Left ventricle myocardium superior (tissue), 1 donor: ENCODE measurements at regions of chr9 and their contacts with region 1.

Region 1: GRCh38 chr9:109903515-109904138 is 123.6 kb downstream of the PALM2AKAP2 start:
- DNase-seq: no peak
- ATAC-seq: peak; percentile 54

Region 2: GRCh38 chr9:109792951-109793546 is 110.6 kb before region 1 on chr9:
- intact Hi-C with region 1: no loop called
- DNase-seq: no peak
- ATAC-seq: peak; percentile 37

Region 3: DNA sequence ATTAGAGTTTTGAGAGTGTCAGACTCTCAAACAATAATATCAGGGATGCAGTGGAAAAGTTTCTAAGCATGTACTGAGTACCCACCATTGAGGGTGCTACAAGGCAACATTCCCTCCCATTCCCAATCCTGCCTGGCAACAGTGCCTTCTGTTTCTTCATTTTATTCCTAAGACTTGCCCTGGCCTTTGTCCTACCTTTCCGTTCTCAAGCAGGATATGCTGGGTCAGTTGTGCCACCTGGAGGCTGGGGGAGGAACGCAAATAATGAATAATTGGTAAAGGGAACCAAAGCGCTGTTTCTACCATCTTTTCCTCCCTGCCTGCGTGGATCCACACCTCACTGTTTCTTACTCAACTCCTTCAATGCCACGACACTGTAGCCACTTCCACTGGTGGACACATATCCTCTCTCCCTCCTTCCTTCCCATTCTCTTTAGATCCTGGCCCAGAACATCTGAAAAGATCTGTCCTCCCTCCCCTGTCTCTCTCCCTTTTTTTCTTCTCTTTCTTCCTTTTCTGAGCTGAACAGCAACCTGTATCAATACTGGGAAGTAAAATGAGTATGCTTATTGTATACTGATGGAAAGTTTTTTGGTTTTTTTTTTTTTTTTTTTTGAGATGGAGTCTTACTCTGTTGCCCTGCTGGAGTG is 154.8 kb after region 1 on chr9:
- intact Hi-C with region 1: loop called (anchors 10 kb)
- DNase-seq: peak; percentile 39
- ATAC-seq: peak; percentile 64

Region 4: DNA sequence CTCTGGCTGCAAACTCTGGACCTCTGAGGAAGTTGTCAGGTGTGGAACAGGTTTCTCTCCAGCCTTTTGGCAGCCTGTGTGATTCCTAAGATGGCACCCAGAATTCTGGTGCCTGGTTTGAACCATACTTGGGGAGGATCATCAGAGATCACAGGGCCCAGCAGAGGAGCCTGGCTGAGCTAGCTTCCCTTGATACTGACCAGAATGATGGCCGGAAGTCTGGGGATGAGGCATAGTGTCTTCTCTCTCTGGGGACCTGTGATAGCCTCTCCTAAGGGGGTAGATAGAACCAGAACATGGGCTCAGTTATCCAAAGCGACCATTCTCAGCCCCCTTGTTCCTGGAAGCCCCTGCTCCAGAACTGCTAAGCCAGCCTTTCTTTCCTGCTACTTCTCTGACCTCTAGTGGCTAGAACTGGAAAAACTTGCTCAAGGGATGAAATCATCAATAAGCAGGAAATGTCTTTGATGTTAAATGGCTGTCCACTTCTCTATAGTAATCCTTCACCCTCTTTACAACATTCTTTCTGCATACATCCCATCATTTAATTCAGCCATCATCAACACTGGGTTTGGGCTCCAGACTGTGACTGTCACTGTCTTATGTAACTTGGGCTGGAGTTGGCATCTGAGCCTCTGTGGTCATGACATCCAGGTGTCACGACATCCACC is 249.2 kb after region 1 on chr9:
- intact Hi-C with region 1: loop called (anchors 5 kb)
- DNase-seq: no peak
- ATAC-seq: peak; percentile 14